Gastrocnemius medialis (tissue), 4 donors: ENCODE measurements at regions of chr1 and their contacts with region 1.

Region 1: GRCh38 chr1:212990276-212990675 is 25.4 kb downstream of the ANGEL2 start:
- DNase-seq: no peak
- ATAC-seq: no peak
- H3K4me3 ChIP-seq: no peak overlapping the region
- H3K27ac ChIP-seq: no peak overlapping the region
- H3K4me1 ChIP-seq: peaks cover 0 to 16% of the 10 kb centered on the region in 2 donors
- H3K27me3 ChIP-seq: no peaks in the 10 kb centered on the region
- CTCF ChIP-seq: no peak
- POLR2A ChIP-seq: no peak

Region 2: GRCh38 chr1:212665241-212666115 is 324.8 kb before region 1 on chr1:
- in situ Hi-C with region 1: loop called in 1 of 4 experiments (anchors 25 kb)
- intact Hi-C with region 1: loop called (anchors 10 kb)
- DNase-seq: peak; percentile 31 to 64
- ATAC-seq: peak; percentile 88 to 96
- H3K4me3 ChIP-seq: peak overlapping the region; percentile 61 to 73 (median 66)
- H3K27ac ChIP-seq: peak overlapping the region; percentile 39 to 74 (median 66)
- H3K4me1 ChIP-seq: peaks cover 0 to 23% of the 10 kb centered on the region in 2 donors
- H3K27me3 ChIP-seq: no peaks in the 10 kb centered on the region
- CTCF ChIP-seq: peak; percentile 83 to 92 (median 87)
- POLR2A ChIP-seq: no peak

Region 3: GRCh38 chr1:212791676-212792395 is 198.4 kb before region 1 on chr1 and contains the starts of genes NSL1 and TATDN3:
- in situ Hi-C with region 1: no loop called
- intact Hi-C with region 1: loop called (anchors 1 kb)
- DNase-seq: peak; percentile 73 to 79
- ATAC-seq: peak; percentile 96 to 97
- H3K4me3 ChIP-seq: peak within 1 kb of the TSS; percentile 76 to 98 (median 94)
- H3K27ac ChIP-seq: peak within 1 kb of the TSS; percentile 87 to 96 (median 90)
- H3K4me1 ChIP-seq: peaks cover 13 to 23% of the 10 kb centered on the region in 2 donors
- H3K27me3 ChIP-seq: no peaks in the 10 kb centered on the region
- CTCF ChIP-seq: peak in 2 of 5 experiments; percentile 11 to 16
- POLR2A ChIP-seq: peak; percentile 58 to 61
- total RNA-seq, gene NSL1: 21.3 to 42.6 (median 28.2) TPM
- total RNA-seq, gene TATDN3: 19.5 to 27.3 (median 25.6) TPM

Region 4: DNA sequence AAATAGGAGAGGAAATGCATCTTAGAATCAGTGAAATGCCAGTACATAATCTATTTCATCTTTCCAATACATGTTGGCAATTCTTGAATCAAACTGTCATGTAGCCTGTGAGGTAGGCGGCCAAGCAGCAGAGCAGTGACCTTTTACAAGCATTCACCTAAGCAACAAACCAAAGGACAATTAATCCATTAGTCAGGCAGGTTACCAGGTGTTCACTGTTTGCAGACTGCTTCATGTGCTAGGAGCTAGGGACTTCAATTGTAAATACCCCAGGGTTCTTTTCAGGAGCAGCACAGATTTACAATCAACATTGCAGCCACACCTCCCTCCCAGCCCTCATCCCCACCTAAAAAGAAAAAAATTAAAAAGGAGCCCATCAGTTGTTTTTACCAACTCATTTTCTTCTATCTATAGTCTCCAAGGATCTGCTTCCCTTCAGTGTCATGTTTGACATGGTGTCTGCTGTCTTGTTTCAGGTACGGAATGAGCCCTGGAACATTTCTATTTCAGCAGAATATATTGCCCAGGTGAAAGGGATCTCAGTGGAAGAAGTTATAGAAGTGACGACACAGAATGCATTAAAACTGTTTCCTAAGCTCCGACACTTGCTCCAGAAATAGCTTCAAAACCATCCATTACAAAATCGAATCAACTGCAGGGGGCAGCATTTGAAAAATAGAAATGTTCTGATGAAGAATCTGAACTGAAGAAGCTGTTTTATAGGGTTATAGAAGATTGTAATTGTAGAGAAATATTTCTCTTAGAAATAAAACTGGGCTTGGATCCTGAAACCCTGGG is 175.5 kb before region 1 on chr1:
- in situ Hi-C with region 1: loop called (anchors 10 to 25 kb)
- intact Hi-C with region 1: loop called (anchors 1 kb)
- DNase-seq: no peak
- ATAC-seq: no peak
- H3K4me3 ChIP-seq: no peak overlapping the region
- H3K27ac ChIP-seq: no peak overlapping the region
- H3K4me1 ChIP-seq: no peaks in the 10 kb centered on the region
- H3K27me3 ChIP-seq: no peaks in the 10 kb centered on the region
- CTCF ChIP-seq: peak in 1 of 5 experiments; percentile 44
- POLR2A ChIP-seq: no peak

Region 5: DNA sequence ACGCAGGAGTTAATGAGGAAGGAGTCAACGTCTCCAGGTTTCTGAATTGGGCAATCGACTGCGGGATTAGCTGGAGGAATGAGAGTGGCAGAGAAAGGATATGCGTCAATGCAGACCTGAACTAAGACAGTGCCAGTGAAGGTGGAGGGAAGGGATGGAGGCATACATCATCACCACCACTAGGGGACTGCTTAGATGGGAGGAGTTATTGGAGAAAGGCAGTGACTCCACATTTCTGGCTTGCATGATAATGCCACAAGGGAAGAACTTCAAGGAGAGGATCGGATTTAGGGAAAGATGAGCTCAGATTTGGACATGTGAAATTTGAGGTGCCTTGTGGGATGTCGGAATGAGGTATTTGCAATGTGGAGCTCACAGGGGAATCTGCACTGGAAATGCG is 22.5 kb before region 1 on chr1:
- in situ Hi-C with region 1: no loop called
- intact Hi-C with region 1: no loop called
- DNase-seq: no peak
- ATAC-seq: no peak
- H3K4me3 ChIP-seq: no peak overlapping the region
- H3K27ac ChIP-seq: no peak overlapping the region
- H3K4me1 ChIP-seq: peaks cover 9 to 18% of the 10 kb centered on the region in 2 donors
- H3K27me3 ChIP-seq: no peaks in the 10 kb centered on the region
- CTCF ChIP-seq: peak in 1 of 5 experiments; percentile 9
- POLR2A ChIP-seq: no peak

Region 6: GRCh38 chr1:213015099-213016050 is 25.1 kb after region 1 on chr1 and contains the start of gene ANGEL2:
- in situ Hi-C with region 1: no loop called
- intact Hi-C with region 1: loop called (anchors 2 kb)
- DNase-seq: peak; percentile 92 to 96
- ATAC-seq: peak; percentile 99 to 100
- H3K4me3 ChIP-seq: peak within 1 kb of the TSS; percentile 64 to 96 (median 90)
- H3K27ac ChIP-seq: peak within 1 kb of the TSS; percentile 81 to 92 (median 86)
- H3K4me1 ChIP-seq: peaks cover 16 to 20% of the 10 kb centered on the region in 2 donors
- H3K27me3 ChIP-seq: no peaks in the 10 kb centered on the region
- CTCF ChIP-seq: no peak
- POLR2A ChIP-seq: peak in 1 of 2 donors; percentile 27
- total RNA-seq, gene ANGEL2: 17.7 to 33.2 (median 25.1) TPM

Region 7: DNA sequence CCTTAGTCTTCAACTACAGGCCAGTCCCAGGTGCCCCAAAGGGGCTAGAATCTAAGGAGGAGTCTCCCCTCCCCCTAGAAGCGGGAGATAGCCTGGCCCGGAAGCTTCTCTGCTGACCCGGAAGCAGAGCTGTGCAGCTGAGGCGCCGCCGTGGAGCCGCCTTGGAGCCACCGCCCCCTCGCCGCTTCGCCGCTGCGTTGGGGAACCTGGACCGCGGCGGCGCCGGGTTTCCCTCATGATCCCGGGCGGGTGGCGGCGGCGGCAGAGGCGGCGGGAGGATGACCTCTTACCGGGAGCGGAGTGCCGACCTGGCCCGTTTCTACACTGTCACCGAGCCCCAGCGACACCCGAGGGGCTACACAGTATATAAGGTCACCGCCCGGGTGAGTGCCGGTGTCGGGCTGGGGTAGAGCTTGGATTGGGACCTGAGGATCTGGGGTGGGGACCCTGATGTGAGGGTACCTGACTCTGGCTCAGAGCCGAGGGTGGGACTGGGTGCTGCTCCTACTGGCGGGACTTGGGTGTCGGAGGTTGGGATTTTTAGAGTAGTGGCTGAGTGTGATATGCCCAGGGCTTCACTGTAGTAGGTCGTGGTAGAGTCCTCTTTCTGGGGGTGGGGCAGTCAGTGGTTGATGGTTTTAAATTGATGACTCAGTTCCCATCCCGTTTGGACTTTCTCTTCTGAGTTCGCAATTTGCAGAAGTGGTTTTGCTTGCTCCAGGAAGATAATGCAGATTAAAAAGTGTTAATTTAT is 61.0 kb after region 1 on chr1 and contains the start of gene RPS6KC1:
- in situ Hi-C with region 1: no loop called
- intact Hi-C with region 1: no loop called
- DNase-seq: peak; percentile 58 to 74
- ATAC-seq: peak; percentile 98 to 99
- H3K4me3 ChIP-seq: peak within 1 kb of the TSS; percentile 89 to 97 (median 95)
- H3K27ac ChIP-seq: peak within 1 kb of the TSS; percentile 73 to 89 (median 84)
- H3K4me1 ChIP-seq: peaks cover 17 to 20% of the 10 kb centered on the region in 2 donors
- H3K27me3 ChIP-seq: peaks cover 4 to 15% (median 4%) of the 10 kb centered on the region in 3 donors
- CTCF ChIP-seq: peak in 2 of 5 experiments; percentile 5 to 27
- POLR2A ChIP-seq: peak; percentile 21 to 40
- total RNA-seq, gene RPS6KC1: 14.5 to 22.2 (median 16.2) TPM

Region 8: GRCh38 chr1:213251972-213252371 is 261.7 kb after region 1 on chr1:
- in situ Hi-C with region 1: no loop called
- intact Hi-C with region 1: no loop called
- DNase-seq: no peak
- ATAC-seq: no peak
- H3K4me3 ChIP-seq: no peak overlapping the region
- H3K27ac ChIP-seq: no peak overlapping the region
- H3K4me1 ChIP-seq: no peaks in the 10 kb centered on the region
- H3K27me3 ChIP-seq: no peaks in the 10 kb centered on the region
- CTCF ChIP-seq: no peak
- POLR2A ChIP-seq: no peak